ENCODE measurements at regions of chr21 and their contacts with region 1.

Region 1: DNA sequence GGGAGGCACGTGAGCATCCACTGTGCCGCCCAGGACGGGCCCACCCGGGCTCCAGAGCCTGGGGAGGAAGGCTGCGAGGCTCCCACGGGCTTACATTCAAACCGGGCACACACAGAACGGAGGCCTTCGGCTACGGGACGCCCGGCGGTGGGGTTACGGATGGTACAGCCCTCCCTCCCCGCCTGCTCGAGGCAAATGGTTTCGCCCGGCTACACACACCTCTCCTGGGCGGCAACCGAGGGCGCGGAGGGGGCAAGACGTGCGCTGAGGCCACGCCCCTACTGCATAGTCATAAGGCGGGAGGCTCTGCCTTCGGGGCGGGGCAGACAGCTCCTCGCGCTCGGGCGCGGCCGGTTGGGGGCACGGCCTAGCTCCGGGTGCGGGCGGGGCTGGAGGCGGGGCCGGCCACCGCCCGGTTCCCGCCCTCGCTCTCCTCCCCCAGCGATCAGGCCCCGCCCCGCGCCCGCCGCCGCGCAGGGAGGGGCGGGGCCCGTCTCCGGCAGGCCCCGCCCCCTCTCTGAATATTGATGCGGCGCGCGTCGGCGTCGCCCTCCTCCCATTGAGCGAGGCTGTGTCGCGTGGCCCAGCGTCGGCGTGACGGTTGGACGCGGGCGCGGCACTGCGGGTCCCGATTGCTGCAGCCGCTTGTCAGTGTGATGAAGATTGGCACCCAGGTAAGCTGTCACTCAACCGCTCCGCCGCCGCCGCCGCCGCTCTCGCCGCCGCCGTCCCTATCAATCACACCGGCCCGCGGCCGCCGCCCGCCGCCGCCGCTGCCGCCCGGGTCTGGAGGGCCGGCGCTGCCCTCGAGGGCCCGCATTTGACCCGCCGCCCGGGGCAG is at the start of gene PKNOX1:
- DNase-seq: peak; percentile 98
- H3K4me3 ChIP-seq: peak within 1 kb of the TSS; percentile 84 to 91 (median 90)
- H3K27ac ChIP-seq: peak within 1 kb of the TSS; percentile 86
- H3K4me1 ChIP-seq: peaks cover 17% of the 10 kb centered on the region
- H3K27me3 ChIP-seq: no peaks in the 10 kb centered on the region
- CTCF ChIP-seq: no peak
- total RNA-seq, gene PKNOX1: 13.3 to 18.3 TPM

Region 2: DNA sequence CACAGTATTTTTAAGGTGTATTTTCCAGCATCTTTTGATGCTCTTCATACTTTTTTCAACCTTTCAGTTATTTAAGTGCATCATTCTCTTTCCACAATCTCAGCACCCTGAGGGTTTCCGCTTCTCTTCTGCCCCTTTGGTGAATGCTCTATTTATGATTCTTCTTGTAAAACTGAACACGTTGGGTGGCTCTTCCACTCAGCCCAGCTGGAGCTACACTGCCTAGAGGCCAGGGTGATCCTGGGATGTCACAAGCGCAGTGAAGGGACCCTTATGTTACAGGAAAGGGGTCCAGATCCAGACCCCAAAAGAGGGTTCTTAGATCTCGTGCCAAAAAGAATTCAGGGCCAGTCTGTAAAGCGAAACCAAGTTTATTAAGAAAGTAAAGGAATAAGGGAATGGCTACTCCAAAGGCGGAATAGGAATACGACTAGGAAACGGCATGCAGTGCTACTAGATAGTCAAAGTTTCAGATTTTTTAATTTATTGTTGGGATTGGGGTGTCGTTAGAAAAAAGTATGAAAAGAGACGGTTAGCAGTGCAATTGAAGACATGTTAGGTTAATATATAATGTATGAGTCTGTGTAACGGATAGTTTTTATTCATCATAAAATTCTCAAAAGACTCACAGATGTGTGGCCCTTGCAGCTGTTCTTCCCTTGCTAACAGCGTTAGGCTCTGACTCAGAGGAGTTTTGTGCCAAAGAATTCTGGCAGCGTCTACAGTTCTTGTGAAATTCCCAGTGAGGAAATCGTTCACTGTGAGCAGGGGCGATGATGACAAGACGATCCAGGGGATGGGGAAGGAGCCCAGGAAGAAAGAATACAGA is 34.4 kb before region 1 on chr21:
- CTCF ChIA-PET with region 1: no interaction called
- dilution Hi-C with region 1: no loop called
- in situ Hi-C with region 1: no loop called
- intact Hi-C with region 1: loop called (anchors 1 kb)
- DNase-seq: peak; percentile 97
- H3K4me3 ChIP-seq: peak overlapping the region in 1 of 3 experiments; percentile 2
- H3K27ac ChIP-seq: no peak overlapping the region
- H3K4me1 ChIP-seq: peaks cover 6% of the 10 kb centered on the region
- H3K27me3 ChIP-seq: no peaks in the 10 kb centered on the region
- CTCF ChIP-seq: no peak

Region 3: DNA sequence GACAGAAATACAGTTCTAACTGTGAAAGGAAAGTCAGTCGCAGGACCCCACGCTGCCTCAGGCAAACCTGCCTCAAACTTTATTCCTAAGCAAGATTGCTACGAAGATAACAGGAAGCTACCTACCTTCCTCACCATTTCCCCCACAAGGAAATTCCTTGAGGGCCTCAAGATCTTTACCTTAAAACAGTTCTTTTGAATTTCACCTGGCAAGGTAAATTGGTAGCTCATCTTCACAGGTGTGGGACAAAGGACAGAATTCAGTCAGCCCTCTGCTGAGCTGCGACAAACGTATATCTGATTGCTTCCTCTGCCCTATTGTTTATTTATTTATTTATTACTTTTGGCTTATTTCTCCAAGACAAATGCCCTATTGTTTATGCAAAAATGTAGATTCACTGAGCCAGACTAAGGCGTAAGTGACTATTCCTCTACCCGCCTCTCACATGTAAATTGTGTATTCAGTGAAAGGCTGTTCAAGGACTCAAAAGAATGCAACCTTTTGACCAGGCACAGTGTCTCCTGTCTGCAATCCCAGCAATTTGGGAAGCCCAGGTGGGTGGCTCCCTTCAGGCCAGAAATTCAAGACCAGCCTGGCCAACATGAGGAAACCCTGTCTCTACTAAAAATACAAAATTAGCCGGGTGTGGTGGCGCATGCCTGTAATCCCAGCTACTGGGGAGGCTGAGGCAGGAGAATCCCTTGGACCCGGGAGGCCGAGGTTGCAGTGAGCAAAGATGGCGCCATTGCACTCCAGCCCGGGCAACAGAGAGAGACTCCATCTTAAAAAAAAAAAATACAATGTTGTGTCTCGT is 17.2 kb before region 1 on chr21:
- CTCF ChIA-PET with region 1: no interaction called
- dilution Hi-C with region 1: no loop called
- in situ Hi-C with region 1: no loop called
- intact Hi-C with region 1: loop called (anchors 1 kb)
- DNase-seq: no peak
- H3K4me3 ChIP-seq: no peak overlapping the region
- H3K27ac ChIP-seq: no peak overlapping the region
- H3K4me1 ChIP-seq: peaks cover 23% of the 10 kb centered on the region
- H3K27me3 ChIP-seq: no peaks in the 10 kb centered on the region
- CTCF ChIP-seq: no peak

Measured in mammary epithelial cell (primary cell).